Gastrocnemius medialis (tissue), 4 donors: ENCODE measurements at regions of chr5 and their contacts with region 1.

Region 1: DNA sequence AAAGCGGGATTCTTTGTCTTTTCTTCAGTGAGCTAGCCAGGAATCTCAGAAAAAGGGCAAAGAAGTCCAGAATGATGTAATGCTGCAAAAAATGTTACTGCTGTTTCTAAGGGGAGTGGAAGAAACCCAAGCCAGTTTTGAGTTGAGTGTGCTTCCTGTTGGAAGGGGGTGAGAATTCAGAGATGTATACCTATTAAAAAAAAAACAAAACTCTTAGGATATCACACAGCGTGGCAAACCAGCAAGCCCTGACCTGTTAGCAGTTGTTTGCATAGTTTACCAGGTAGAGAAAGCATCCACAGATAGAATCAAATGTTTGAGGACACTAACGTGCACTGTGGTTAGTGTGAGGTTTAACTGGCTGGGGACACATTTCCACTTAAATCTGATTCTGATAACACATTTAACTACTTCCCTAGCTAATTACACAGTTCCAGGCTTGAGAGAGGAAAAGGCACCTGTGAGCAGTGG is 11.4 kb downstream of the BASP1 start:
- DNase-seq: no peak
- ATAC-seq: peak in 1 of 2 donors; percentile 33
- H3K4me3 ChIP-seq: no peak overlapping the region
- H3K27ac ChIP-seq: no peak overlapping the region
- H3K4me1 ChIP-seq: no peaks in the 10 kb centered on the region
- H3K27me3 ChIP-seq: peaks cover 3 to 11% (median 7%) of the 10 kb centered on the region in 3 donors
- CTCF ChIP-seq: no peak
- POLR2A ChIP-seq: no peak

Region 2: GRCh38 chr5:17087035-17087434 is 141.8 kb before region 1 on chr5:
- in situ Hi-C with region 1: no loop called
- intact Hi-C with region 1: no loop called
- DNase-seq: no peak
- ATAC-seq: no peak
- H3K4me3 ChIP-seq: no peak overlapping the region
- H3K27ac ChIP-seq: no peak overlapping the region
- H3K4me1 ChIP-seq: no peaks in the 10 kb centered on the region
- H3K27me3 ChIP-seq: no peaks in the 10 kb centered on the region
- CTCF ChIP-seq: no peak
- POLR2A ChIP-seq: no peak

Region 3: DNA sequence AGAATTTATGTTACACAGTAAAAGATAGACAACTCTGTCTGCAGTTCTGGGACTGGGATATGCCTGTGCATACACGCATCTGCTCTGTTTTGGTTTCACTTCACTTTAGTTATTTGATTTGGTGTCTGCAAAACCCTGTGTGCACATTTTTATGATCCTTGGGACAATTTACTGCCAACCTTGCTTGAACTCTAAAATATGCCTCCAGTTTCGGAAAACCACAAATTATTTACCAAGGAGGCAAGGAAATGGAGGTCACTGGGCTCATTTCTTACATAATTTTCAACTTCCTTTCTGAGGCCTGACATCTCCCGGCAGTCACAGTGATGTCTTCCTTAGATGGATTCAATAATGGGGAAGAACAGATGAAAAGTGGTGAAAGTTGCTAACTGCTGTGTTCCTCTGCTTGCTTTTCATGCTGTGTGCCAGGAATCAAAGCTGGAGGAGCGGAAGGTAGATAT is 207.9 kb after region 1 on chr5:
- in situ Hi-C with region 1: no loop called
- intact Hi-C with region 1: no loop called
- DNase-seq: no peak
- ATAC-seq: no peak
- H3K4me3 ChIP-seq: peak overlapping the region in 3 of 4 donors; percentile 9 to 43 (median 15)
- H3K27ac ChIP-seq: no peak overlapping the region
- H3K4me1 ChIP-seq: no peaks in the 10 kb centered on the region
- H3K27me3 ChIP-seq: no peaks in the 10 kb centered on the region
- CTCF ChIP-seq: no peak
- POLR2A ChIP-seq: no peak

Region 4: DNA sequence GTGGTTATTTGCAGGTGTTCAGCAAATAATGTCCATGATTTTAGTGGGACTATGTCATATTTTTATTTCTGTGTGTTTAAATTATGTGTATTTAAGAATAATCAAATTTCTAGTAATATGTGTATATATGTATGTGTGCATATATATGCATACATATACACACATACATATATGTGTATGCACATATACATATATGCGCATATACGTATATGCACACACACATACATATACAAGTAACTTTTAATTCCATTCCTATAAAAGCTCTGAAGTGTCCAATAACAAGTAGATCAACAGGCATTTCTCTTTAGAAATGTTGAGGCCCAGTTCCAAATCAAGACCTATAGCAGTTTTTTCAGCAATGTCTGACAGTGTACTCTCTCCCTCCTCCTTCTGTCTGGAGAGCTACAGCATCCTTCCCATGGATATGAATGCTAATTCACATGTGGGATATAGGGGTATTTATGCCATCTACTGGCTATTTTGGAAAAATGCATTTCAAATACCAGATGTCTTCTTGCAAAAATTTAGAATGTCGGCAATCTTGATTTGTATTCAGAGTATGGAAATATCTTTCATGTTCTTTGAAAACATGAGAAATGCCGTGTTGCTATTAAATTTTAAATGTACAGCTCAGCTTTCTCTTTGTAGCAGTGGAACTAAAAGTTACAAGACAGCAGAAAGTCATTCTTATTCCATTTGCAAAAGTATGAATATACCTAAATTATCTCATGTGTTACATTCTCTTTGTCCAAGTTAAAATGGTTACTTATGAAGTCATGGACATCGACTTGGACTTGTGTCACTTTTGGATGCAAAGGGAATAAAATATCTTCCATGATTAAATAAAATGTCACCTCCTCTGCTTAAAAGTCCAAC is 1053.1 kb after region 1 on chr5:
- in situ Hi-C with region 1: loop called in 1 of 4 experiments (anchors 25 kb)
- intact Hi-C with region 1: no loop called
- DNase-seq: no peak
- ATAC-seq: no peak
- H3K4me3 ChIP-seq: no peak overlapping the region
- H3K27ac ChIP-seq: no peak overlapping the region
- H3K4me1 ChIP-seq: no peaks in the 10 kb centered on the region
- H3K27me3 ChIP-seq: no peaks in the 10 kb centered on the region
- CTCF ChIP-seq: no peak
- POLR2A ChIP-seq: no peak

Region 5: DNA sequence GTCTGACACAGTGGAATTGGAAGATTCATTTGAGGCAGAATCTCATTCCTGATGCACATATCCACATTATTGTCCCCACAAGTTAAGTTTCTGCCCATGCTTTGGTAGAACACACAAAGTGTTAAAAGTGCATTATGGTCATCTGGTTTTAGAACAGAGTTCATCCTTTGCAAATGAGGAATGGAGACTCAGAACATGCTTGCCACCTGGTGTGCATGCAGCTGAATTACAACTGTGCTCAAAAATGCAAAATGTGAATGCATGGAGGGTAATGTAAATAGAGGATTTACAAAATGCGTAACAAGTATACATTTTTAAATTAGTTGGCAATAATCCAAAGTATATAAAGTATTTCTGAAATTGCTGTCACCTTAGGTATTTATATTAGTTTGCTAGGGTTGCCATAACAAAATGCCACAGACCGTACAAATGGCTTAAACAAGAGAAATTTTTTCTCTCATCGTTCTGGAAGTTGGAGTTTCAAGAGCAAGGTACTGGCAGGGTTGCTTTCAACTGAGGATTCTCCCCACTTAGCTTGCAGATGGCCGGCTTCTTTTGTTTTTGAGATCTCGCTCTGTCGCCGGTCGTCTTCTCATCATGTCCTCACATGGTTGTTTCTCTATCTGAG is 1076.6 kb after region 1 on chr5:
- in situ Hi-C with region 1: loop called in 2 of 4 experiments (anchors 10 to 25 kb)
- intact Hi-C with region 1: no loop called
- DNase-seq: no peak
- ATAC-seq: no peak
- H3K4me3 ChIP-seq: no peak overlapping the region
- H3K27ac ChIP-seq: no peak overlapping the region
- H3K4me1 ChIP-seq: no peaks in the 10 kb centered on the region
- H3K27me3 ChIP-seq: no peaks in the 10 kb centered on the region
- CTCF ChIP-seq: no peak
- POLR2A ChIP-seq: no peak

Region 6: DNA sequence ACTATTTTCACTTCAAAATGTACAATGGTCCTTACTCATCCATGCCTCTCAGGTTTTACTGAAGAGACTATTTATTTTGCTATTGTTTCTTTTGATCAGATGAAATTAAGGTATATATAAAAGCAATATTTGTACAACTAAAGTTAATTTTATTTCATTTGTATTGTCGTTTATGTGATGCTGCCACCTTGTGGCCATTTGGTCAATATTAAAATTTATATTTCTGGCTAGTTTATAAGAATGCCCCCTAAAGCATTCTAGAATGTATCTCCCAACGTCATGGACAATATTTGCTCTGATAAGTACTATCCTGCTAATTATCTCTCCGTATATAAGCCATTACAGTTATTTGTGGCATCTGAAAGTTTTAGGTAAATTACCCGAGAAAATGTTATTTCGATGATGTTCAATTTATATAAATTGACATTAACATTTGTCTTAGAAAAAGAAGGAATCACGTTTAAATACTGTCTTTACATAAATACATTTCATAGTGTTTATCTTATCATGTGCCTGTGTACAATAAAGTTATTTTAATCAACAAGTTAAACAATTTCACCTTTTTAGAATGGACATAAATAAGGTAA is 1085.4 kb after region 1 on chr5:
- in situ Hi-C with region 1: loop called in 2 of 4 experiments (anchors 10 to 25 kb)
- intact Hi-C with region 1: no loop called
- DNase-seq: no peak
- ATAC-seq: no peak
- H3K4me3 ChIP-seq: no peak overlapping the region
- H3K27ac ChIP-seq: no peak overlapping the region
- H3K4me1 ChIP-seq: no peaks in the 10 kb centered on the region
- H3K27me3 ChIP-seq: no peaks in the 10 kb centered on the region
- CTCF ChIP-seq: peak in 3 of 5 experiments; percentile 19 to 52 (median 33)
- POLR2A ChIP-seq: no peak